ENCODE measurements at regions of chr11 and their contacts with region 1.

Region 1: DNA sequence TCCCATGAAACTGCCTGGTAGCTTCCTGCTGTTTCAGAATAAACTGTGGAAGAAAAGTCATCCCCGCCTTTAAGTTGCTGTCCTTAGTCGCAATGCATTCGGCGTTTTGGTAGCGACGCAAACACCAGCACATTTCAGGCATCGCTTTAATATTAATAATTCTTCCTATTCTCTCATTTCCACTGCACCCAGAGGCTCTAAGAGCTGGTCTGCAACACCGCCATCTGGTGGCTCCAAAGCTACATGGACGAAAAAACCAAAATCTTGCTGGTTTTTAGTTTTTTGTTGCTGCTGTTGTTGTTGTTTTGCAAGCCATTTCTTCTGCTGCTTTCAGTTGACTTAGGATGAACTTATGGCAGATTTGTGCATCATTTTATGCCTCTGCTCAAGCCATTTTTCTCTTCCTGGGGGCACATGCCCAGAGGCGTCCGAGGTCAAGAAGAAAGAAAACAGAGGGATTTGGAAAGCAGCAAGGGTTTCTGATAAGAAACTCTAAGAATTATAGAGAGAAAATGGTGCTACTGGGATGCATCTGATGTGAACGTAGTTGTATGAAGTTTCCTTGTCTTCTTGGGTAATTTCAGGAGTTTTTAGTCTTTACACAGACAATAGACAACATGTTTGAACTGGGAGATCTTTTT is 345.4 kb upstream of the KIRREL3 start:
- DNase-seq: peak; percentile 13
- ATAC-seq: 0 out of 3 replicates have a peak, but pooled peaks have one; percentile 44
- H3K4me3 ChIP-seq: no peak overlapping the region
- H3K27ac ChIP-seq: no peak overlapping the region
- H3K4me1 ChIP-seq: no peaks in the 10 kb centered on the region
- H3K27me3 ChIP-seq: no peaks in the 10 kb centered on the region
- CTCF ChIP-seq: peak; percentile 62
- EP300 ChIP-seq: no peak
- POLR2A ChIP-seq: no peak
- RAD21 ChIP-seq: no peak

Region 2: GRCh38 chr11:126431401-126432064 is 914.4 kb before region 1 on chr11:
- CTCF ChIA-PET with region 1: no interaction called
- POLR2A ChIA-PET with region 1: no interaction called
- in situ Hi-C with region 1: loop called (anchors 10 kb)
- intact Hi-C with region 1: no loop called
- DNase-seq: peak; percentile 27
- ATAC-seq: peak; percentile 29; the same call in 2 of the 3 replicates
- H3K4me3 ChIP-seq: no peak overlapping the region
- H3K27ac ChIP-seq: no peak overlapping the region
- H3K4me1 ChIP-seq: peaks cover 11% of the 10 kb centered on the region
- H3K27me3 ChIP-seq: peaks cover 0 to 7% of the 10 kb centered on the region in 2 experiments; a peak in 2 of 5 replicates
- CTCF ChIP-seq: no peak
- EP300 ChIP-seq: no peak
- POLR2A ChIP-seq: no peak
- RAD21 ChIP-seq: no peak

Region 3: DNA sequence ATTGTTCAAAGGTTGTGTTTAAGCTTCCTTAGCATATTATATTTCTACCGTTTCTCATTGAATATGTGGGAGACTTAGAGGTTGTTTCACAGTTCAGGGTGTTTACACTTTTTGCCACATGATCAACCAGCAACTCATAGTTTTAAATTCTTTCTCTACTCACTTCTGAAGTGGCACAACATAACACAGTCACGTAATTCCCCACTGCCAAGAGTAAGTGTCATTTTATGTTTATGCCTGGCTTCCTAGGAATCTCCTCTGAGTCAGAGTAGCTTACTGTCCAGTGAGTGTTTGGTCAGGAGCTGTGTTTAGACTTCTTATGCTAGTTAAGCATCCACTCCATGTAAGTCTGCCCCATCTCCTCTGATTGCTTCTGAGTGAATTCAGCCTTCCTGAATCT is 175.5 kb after region 1 on chr11:
- CTCF ChIA-PET with region 1: no interaction called
- POLR2A ChIA-PET with region 1: no interaction called
- in situ Hi-C with region 1: no loop called
- intact Hi-C with region 1: no loop called
- DNase-seq: no peak
- ATAC-seq: no peak
- H3K4me3 ChIP-seq: no peak overlapping the region
- H3K27ac ChIP-seq: no peak overlapping the region
- H3K4me1 ChIP-seq: no peaks in the 10 kb centered on the region
- H3K27me3 ChIP-seq: no peaks in the 10 kb centered on the region
- CTCF ChIP-seq: no peak
- EP300 ChIP-seq: no peak
- POLR2A ChIP-seq: no peak
- RAD21 ChIP-seq: no peak

Region 4: GRCh38 chr11:127609025-127609773 is 263.3 kb after region 1 on chr11:
- CTCF ChIA-PET with region 1: no interaction called
- POLR2A ChIA-PET with region 1: no interaction called
- in situ Hi-C with region 1: no loop called
- intact Hi-C with region 1: no loop called
- DNase-seq: no peak
- ATAC-seq: no peak
- H3K4me3 ChIP-seq: no peak overlapping the region
- H3K27ac ChIP-seq: no peak overlapping the region
- H3K4me1 ChIP-seq: no peaks in the 10 kb centered on the region
- H3K27me3 ChIP-seq: no peaks in the 10 kb centered on the region
- CTCF ChIP-seq: no peak
- EP300 ChIP-seq: no peak
- POLR2A ChIP-seq: no peak
- RAD21 ChIP-seq: no peak

Measured in HepG2 (cell line).